Activated CD4-positive, alpha-beta T cell treated with anti-CD3 and anti-CD28 coated beads, Interleukin-2, amount 10 ng/mL, durations not matched to agents 7 days and 5 days (primary cell): ENCODE measurements at regions of chrX and their contacts with region 1.

Region 1: GRCh38 chrX:10083809-10084208 is 73.0 kb upstream of the CLCN4 start:
- DNase-seq: no peak
- H3K4me3 Mint-ChIP-seq: no peak overlapping the region
- H3K27ac Mint-ChIP-seq: no peak overlapping the region
- H3K4me1 Mint-ChIP-seq: peaks cover 37% of the 10 kb centered on the region
- H3K27me3 Mint-ChIP-seq: no peaks in the 10 kb centered on the region

Region 2: GRCh38 chrX:10071451-10072144 is 12.2 kb before region 1 on chrX:
- CTCF ChIA-PET with region 1: no interaction called
- POLR2A ChIA-PET with region 1: no interaction called
- DNase-seq: no peak
- H3K4me3 Mint-ChIP-seq: no peak overlapping the region
- H3K27ac Mint-ChIP-seq: no peak overlapping the region
- H3K4me1 Mint-ChIP-seq: peaks cover 9% of the 10 kb centered on the region
- H3K27me3 Mint-ChIP-seq: no peaks in the 10 kb centered on the region

Region 3: GRCh38 chrX:10095698-10096432 is 12.1 kb after region 1 on chrX:
- CTCF ChIA-PET with region 1: interaction called, 11 read pairs
- POLR2A ChIA-PET with region 1: no interaction called
- DNase-seq: no peak
- H3K4me3 Mint-ChIP-seq: no peak overlapping the region
- H3K27ac Mint-ChIP-seq: peak overlapping the region; percentile 46
- H3K4me1 Mint-ChIP-seq: peaks cover 45% of the 10 kb centered on the region
- H3K27me3 Mint-ChIP-seq: no peaks in the 10 kb centered on the region

Region 4: GRCh38 chrX:10106806-10107205 is 23.0 kb after region 1 on chrX:
- CTCF ChIA-PET with region 1: no interaction called
- POLR2A ChIA-PET with region 1: no interaction called
- DNase-seq: peak; percentile 54
- H3K4me3 Mint-ChIP-seq: peak overlapping the region; percentile 36
- H3K27ac Mint-ChIP-seq: peak overlapping the region; percentile 84
- H3K4me1 Mint-ChIP-seq: peaks cover 51% of the 10 kb centered on the region
- H3K27me3 Mint-ChIP-seq: no peaks in the 10 kb centered on the region